ENCODE measurements at regions of chr10 and their contacts with region 1.

Region 1: GRCh38 chr10:17228091-17228940 is at the start of gene VIM:
- DNase-seq: peak; percentile 97
- H3K4me3 Mint-ChIP-seq: peak within 1 kb of the TSS; percentile 76
- H3K27ac Mint-ChIP-seq: peak within 1 kb of the TSS; percentile 95
- H3K4me1 Mint-ChIP-seq: peaks cover 18% of the 10 kb centered on the region
- H3K27me3 Mint-ChIP-seq: no peaks in the 10 kb centered on the region
- CTCF ChIP-seq: no peak
- total RNA-seq, gene VIM: 1,413 and 1,430 TPM in 2 replicates

Region 2: GRCh38 chr10:16195178-16195769 is 1033.0 kb before region 1 on chr10:
- CTCF ChIA-PET with region 1: no interaction called
- POLR2A ChIA-PET with region 1: no interaction called
- intact Hi-C with region 1: no loop called
- DNase-seq: no peak
- H3K4me3 Mint-ChIP-seq: no peak overlapping the region
- H3K27ac Mint-ChIP-seq: no peak overlapping the region
- H3K4me1 Mint-ChIP-seq: peaks cover 7% of the 10 kb centered on the region
- H3K27me3 Mint-ChIP-seq: no peaks in the 10 kb centered on the region
- CTCF ChIP-seq: no peak

Region 3: DNA sequence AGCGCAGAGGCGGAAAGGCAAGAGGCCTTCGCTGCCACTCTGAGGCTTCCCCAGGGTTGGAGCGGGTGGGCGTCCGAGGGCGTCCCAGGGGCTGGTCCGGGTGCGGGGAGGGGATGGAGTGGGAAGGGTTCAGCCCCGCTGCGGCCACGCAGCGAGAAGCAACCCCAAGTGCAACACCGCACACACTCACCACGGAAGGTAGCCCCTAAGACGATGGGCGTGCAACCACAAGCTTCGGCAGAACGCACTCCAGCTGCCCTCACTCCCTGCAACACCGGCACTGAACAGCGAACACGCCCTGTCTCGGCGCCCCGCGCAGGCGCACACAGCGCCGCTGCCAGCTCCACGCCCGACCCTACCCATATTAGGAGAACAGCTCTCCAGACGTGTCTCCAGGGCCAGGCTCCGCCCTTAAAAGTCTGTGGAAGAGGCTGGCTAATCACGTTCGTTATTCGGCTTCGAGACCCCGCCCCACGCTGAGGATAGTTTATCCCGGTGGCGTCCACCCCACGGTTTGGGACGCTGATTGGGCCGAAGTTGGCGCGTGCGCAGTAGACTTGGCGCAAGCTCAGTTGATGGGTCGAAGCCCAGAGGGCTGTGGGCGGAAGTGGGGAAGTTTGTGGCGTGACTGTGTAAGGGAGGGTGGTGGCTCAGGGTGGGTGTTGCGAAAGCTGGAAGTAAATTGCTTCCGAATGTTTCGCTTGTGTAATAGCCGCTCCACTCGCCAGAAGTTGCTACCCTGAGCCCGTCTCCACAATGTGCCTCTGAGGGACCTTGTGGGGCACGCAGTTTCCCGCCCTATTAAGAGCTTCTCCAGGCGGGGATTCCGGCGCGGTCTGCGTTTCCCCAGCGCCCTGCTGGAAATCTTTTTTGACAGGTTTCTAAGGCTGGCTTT is 410.9 kb before region 1 on chr10 and contains the start of gene RSU1:
- CTCF ChIA-PET with region 1: no interaction called
- POLR2A ChIA-PET with region 1: interaction called, 17 read pairs
- intact Hi-C with region 1: no loop called
- DNase-seq: peak; percentile 100
- H3K4me3 Mint-ChIP-seq: peak within 1 kb of the TSS; percentile 94
- H3K27ac Mint-ChIP-seq: peak within 1 kb of the TSS; percentile 74
- H3K4me1 Mint-ChIP-seq: peaks cover 17% of the 10 kb centered on the region
- H3K27me3 Mint-ChIP-seq: no peaks in the 10 kb centered on the region
- CTCF ChIP-seq: no peak
- total RNA-seq, gene RSU1: 50.5 and 54.4 TPM in 2 replicates

Region 4: DNA sequence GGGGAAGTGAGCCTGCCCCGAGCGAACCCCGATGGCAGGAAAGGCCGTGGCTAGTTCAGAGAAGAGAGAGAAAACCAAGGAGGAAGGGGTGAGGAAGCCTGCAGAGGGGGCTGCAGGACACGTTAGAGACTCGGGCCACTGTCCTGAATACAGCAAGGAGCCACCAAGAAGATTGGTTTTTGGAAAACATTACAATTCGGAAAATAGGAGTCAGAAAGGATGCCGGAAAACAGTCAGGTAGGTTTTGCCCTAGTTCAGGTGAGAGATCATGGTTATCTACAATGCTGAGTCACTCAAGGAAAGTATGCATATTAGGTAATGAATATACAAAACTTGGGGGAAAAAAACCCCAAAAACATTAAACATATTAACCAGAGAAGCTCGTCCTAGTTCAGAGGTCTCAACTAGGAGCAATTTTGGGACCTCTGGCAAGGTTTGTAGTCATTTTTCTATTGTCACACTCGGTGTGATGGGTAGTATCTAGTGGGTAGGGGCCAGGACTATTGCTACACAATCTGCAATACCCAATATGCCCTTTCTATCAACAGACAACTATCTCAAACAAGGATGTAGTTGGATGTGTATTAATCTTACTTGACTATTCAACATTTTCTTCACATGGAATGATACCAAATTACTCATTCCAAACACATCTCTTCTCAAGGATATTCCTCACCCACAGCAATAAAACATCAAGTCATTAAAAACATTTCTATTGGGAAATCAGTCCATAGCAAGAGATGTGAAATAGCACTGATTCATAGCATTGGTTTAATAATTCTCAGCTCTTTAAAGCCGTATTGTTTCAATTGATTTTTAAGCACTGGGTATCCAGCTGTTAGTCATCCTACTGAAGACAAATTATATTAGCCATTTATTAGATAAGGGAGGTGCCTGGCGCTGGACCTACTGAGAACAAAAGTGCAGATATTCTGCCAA is 336.7 kb before region 1 on chr10:
- CTCF ChIA-PET with region 1: no interaction called
- POLR2A ChIA-PET with region 1: no interaction called
- intact Hi-C with region 1: loop called (anchors 5 kb)
- DNase-seq: peak; percentile 59
- H3K4me3 Mint-ChIP-seq: no peak overlapping the region
- H3K27ac Mint-ChIP-seq: no peak overlapping the region
- H3K4me1 Mint-ChIP-seq: peaks cover 20% of the 10 kb centered on the region
- H3K27me3 Mint-ChIP-seq: no peaks in the 10 kb centered on the region
- CTCF ChIP-seq: no peak

Region 5: DNA sequence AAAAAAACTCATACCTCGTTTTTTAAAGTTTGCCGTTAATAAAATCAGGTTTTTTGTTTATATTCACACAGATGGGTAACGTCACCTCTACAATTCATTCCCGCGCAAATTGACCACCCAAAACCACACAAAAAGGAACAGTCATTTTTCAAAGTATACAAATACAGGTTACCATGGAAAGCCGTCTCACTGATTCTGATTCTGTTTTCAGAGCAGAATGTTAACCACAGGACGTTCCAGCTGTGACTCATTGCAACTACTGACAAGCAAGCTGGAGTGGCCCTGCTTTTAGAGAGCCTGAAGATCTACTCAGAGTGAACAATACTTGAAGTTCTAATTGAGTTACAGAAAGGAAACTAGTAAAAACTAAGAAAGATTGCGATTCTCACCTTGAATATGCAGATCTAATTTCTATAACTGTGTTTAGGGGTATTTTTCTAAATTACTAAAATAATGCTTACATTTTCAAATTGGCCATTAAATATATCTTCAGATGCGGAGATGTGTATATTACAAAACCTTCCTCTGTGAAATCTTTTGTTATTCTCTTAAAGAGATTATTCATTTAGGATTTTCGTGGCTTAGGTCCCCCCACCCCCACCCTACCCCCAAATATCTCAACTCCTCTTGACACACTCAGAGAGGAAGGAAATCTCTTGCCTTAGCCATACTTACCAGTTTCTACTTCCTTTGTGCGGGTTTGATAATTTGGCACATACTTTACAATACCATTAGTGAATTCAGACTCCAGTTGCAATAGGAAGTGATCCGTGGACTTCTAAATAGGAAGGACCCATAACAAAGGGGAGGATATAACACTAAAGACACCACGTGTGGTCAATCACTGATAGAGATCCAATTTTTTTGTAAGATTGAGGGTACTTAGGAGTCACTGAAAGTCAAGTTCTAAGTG is 204.7 kb before region 1 on chr10:
- CTCF ChIA-PET with region 1: interaction called, 4 read pairs
- POLR2A ChIA-PET with region 1: no interaction called
- intact Hi-C with region 1: loop called (anchors 1 kb)
- DNase-seq: peak; percentile 90
- H3K4me3 Mint-ChIP-seq: peak overlapping the region; percentile 67
- H3K27ac Mint-ChIP-seq: peak overlapping the region; percentile 98
- H3K4me1 Mint-ChIP-seq: peaks cover 28% of the 10 kb centered on the region
- H3K27me3 Mint-ChIP-seq: no peaks in the 10 kb centered on the region
- CTCF ChIP-seq: no peak

Region 6: DNA sequence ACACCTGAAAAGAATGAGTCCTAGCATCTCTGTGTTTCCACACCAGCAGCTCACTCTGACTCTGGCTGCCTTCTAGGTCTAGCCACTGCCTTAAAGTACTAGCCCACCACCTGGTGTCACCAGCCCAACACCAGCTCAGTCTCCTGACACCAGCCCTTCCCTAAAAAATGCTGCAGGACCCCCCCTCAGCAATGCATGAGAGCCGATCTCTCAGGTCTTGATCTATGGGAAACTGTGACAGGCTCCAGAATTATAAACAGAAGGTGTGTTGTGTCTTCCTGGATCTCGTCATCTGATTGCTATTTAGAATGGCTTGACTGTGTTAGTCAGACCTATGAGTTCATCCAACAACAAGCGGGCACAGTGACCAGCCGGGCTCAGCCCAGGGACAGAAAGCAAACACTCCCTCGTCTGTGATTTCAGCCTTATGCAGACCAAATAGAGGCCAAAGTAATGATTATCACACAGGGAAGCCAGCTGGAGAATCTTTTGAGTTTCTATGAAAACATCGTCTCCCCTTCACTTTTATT is 165.3 kb before region 1 on chr10:
- CTCF ChIA-PET with region 1: no interaction called
- POLR2A ChIA-PET with region 1: interaction called, 3 read pairs
- intact Hi-C with region 1: loop called (anchors 2 kb)
- DNase-seq: peak; percentile 72
- H3K4me3 Mint-ChIP-seq: peak overlapping the region; percentile 51
- H3K27ac Mint-ChIP-seq: peak overlapping the region; percentile 63
- H3K4me1 Mint-ChIP-seq: peaks cover 52% of the 10 kb centered on the region
- H3K27me3 Mint-ChIP-seq: no peaks in the 10 kb centered on the region
- CTCF ChIP-seq: no peak

Region 7: GRCh38 chr10:17074541-17074847 is 153.8 kb before region 1 on chr10:
- CTCF ChIA-PET with region 1: no interaction called
- POLR2A ChIA-PET with region 1: no interaction called
- intact Hi-C with region 1: no loop called
- DNase-seq: no peak
- H3K4me3 Mint-ChIP-seq: no peak overlapping the region
- H3K27ac Mint-ChIP-seq: peak overlapping the region; percentile 54
- H3K4me1 Mint-ChIP-seq: peaks cover 29% of the 10 kb centered on the region
- H3K27me3 Mint-ChIP-seq: no peaks in the 10 kb centered on the region
- CTCF ChIP-seq: no peak

Region 8: GRCh38 chr10:17200912-17201793 is 27.2 kb before region 1 on chr10 and contains the start of gene TRDMT1:
- CTCF ChIA-PET with region 1: interaction called, 23 read pairs
- POLR2A ChIA-PET with region 1: interaction called, 126 read pairs
- intact Hi-C with region 1: loop called (anchors 1 kb)
- DNase-seq: peak; percentile 89
- H3K4me3 Mint-ChIP-seq: peak within 1 kb of the TSS; percentile 90
- H3K27ac Mint-ChIP-seq: peak within 1 kb of the TSS; percentile 88
- H3K4me1 Mint-ChIP-seq: peaks cover 29% of the 10 kb centered on the region
- H3K27me3 Mint-ChIP-seq: no peaks in the 10 kb centered on the region
- CTCF ChIP-seq: no peak
- total RNA-seq, gene TRDMT1: 5.4 and 8.7 TPM in 2 replicates

Region 9: DNA sequence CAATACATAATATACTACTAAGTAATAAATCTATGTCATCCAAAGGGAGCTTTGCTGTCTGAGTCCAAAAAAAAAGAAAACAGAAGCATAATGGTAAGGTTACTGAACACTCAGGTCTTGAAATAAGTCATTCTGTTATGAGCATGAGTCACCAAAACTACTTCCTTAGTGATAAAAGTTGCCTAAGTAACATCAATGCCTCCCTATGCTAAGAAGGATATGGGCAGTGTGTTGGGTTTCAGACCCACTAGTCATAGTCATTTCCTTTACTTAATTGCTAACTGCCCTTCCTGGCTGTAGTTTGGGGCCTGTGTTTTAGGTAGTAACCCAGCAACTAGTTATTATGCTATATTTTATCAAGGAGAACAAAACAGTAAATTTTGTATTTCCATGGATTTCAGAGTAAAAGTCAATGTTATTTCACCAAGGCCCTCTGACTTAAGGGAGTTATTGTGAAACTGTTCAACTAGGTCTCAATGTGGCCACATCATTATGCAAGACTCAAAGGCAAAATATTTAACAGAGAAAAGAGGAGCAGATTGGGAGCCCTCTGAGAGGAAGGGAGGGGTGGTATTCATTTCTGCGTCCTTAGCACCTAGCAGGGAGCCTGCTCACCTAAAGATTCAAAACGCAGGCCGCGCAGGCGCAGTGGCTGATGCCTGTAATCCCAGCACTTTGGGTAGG is 12.0 kb before region 1 on chr10:
- CTCF ChIA-PET with region 1: interaction called, 9 read pairs
- POLR2A ChIA-PET with region 1: interaction called, 56 read pairs
- intact Hi-C with region 1: loop called (anchors 1 kb)
- DNase-seq: peak; percentile 87
- H3K4me3 Mint-ChIP-seq: peak overlapping the region; percentile 19
- H3K27ac Mint-ChIP-seq: peak overlapping the region; percentile 95
- H3K4me1 Mint-ChIP-seq: peaks cover 28% of the 10 kb centered on the region
- H3K27me3 Mint-ChIP-seq: no peaks in the 10 kb centered on the region
- CTCF ChIP-seq: no peak